PC-9 (cell line): ENCODE measurements at regions of chr18 and their contacts with region 1.

Region 1: GRCh38 chr18:76484749-76485387 is 10.2 kb downstream of the ZNF516 start:
- DNase-seq: no peak
- H3K4me3 ChIP-seq: no peak overlapping the region
- H3K27ac ChIP-seq: no peak overlapping the region
- H3K4me1 ChIP-seq: peaks cover 6% of the 10 kb centered on the region; the same call in 1 of the 2 replicates
- H3K27me3 ChIP-seq: no peaks in the 10 kb centered on the region
- CTCF ChIP-seq: no peak

Region 2: GRCh38 chr18:76450452-76451395 is 34.1 kb before region 1 on chr18:
- CTCF ChIA-PET with region 1: no interaction called
- POLR2A ChIA-PET with region 1: interaction called, 12 read pairs
- intact Hi-C with region 1: no loop called
- DNase-seq: no peak
- H3K4me3 ChIP-seq: no peak overlapping the region
- H3K27ac ChIP-seq: no peak overlapping the region
- H3K4me1 ChIP-seq: no peaks in the 10 kb centered on the region
- H3K27me3 ChIP-seq: no peaks in the 10 kb centered on the region
- CTCF ChIP-seq: no peak